ENCODE measurements at regions of chr1 and their contacts with region 1.

Region 1: DNA sequence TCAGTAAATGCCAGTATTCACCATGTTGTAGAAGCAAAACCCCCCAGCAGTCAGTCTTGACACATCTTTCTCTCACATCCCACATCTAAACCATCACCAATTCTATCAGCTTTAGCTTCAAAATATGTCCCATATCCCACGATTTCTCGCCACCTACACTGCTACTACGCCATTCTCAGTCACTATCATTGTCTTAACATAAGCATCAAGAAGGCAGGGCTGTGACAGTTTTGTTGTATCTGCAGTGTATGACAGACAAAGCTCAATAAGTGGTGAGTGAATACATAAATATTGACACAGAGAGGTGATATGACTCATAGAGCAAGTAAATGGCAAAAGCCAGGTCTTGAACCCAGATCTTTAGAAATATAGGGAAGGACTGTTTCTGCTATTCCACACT is 59.9 kb downstream of the JAK1 start:
- DNase-seq: peak; percentile 59
- H3K4me3 Mint-ChIP-seq: no peak overlapping the region
- H3K27ac Mint-ChIP-seq: peak overlapping the region; percentile 58
- H3K4me1 Mint-ChIP-seq: peaks cover 91% of the 10 kb centered on the region
- H3K27me3 Mint-ChIP-seq: no peaks in the 10 kb centered on the region

Region 2: GRCh38 chr1:64891448-64891825 is 15.0 kb before region 1 on chr1:
- CTCF ChIA-PET with region 1: interaction called, 3 read pairs
- POLR2A ChIA-PET with region 1: interaction called, 3 read pairs
- intact Hi-C with region 1: loop called (anchors 2 kb)
- DNase-seq: peak; percentile 34
- H3K4me3 Mint-ChIP-seq: no peak overlapping the region
- H3K27ac Mint-ChIP-seq: no peak overlapping the region
- H3K4me1 Mint-ChIP-seq: peaks cover 93% of the 10 kb centered on the region
- H3K27me3 Mint-ChIP-seq: no peaks in the 10 kb centered on the region

Region 3: DNA sequence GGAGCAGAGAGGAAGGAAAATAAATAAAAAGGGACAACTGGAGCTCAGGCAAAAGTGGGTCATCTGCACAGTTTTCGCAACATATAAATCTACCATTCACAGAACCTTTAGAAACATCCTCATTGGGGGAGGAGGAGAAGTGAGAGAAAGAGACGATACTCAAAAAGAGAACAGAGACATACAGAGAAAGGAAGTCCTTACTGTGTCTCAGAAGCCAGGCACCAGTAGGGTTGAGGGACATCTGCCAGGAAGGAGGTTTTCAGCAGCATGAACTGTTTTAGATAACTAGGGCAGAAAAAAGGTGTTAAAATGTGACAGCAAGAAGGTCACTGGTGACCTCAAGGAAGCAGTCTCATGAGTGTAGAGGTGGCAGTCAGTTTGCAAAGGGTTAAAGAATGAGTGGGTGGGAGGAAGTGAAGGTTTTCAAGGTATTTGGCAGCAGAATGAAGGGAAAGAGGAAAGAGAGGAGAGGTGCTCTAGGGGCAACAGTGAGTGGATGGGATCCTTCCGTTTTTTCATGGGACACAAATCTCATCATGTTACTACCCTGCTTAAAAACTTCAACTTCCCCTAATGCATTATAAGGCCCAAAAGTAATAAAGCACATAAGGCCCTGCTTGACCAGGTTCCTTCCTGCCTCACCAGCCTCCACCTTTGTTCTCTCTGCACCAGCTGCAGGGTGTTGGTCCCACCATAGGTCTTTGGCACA is 50.4 kb after region 1 on chr1:
- CTCF ChIA-PET with region 1: no interaction called
- POLR2A ChIA-PET with region 1: interaction called, 6 read pairs
- intact Hi-C with region 1: loop called (anchors 2 kb)
- DNase-seq: peak; percentile 76
- H3K4me3 Mint-ChIP-seq: no peak overlapping the region
- H3K27ac Mint-ChIP-seq: no peak overlapping the region
- H3K4me1 Mint-ChIP-seq: peaks cover 59% of the 10 kb centered on the region
- H3K27me3 Mint-ChIP-seq: no peaks in the 10 kb centered on the region

Region 4: GRCh38 chr1:65090403-65090802 is 184.0 kb after region 1 on chr1:
- CTCF ChIA-PET with region 1: no interaction called
- POLR2A ChIA-PET with region 1: no interaction called
- intact Hi-C with region 1: no loop called
- DNase-seq: no peak
- H3K4me3 Mint-ChIP-seq: no peak overlapping the region
- H3K27ac Mint-ChIP-seq: no peak overlapping the region
- H3K4me1 Mint-ChIP-seq: no peaks in the 10 kb centered on the region
- H3K27me3 Mint-ChIP-seq: peaks cover 2% of the 10 kb centered on the region